Activated CD4-positive, alpha-beta T cell treated with anti-CD3 and anti-CD28 coated beads for 36 hours (primary cell): ENCODE measurements at regions of chr16 and their contacts with region 1.

Region 1: GRCh38 chr16:87203060-87203656 is 114.0 kb downstream of the C16orf95 start:
- DNase-seq: peak; percentile 79
- ATAC-seq: peak; percentile 83
- H3K4me3 Mint-ChIP-seq: no peak overlapping the region
- H3K27ac Mint-ChIP-seq: no peak overlapping the region
- H3K4me1 Mint-ChIP-seq: no peaks in the 10 kb centered on the region
- H3K27me3 Mint-ChIP-seq: peaks cover 8% of the 10 kb centered on the region

Region 2: DNA sequence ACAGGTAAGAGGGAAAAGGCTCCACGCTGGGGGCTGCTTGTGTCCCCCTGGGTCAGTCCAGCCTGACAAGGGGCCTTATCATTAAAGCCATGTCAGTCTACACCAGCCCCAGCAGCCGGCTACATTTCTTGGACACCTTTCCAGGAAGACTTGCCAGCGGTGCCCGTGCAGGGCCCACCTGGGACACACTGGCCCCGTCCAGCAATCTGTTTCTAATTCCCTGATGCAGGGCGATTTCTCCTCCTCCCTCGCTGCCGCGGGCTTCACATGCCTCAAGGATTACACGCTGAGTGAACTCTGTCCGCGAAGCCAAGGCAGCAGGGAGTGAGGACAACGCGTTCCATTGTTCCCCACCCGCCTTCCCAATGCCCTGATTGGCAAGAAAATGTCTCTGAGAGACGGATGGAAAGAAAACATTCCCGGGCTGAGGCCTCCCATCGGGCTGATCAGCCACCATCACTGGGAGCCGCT is 70.6 kb before region 1 on chr16:
- CTCF ChIA-PET with region 1: no interaction called
- POLR2A ChIA-PET with region 1: no interaction called
- intact Hi-C with region 1: no loop called
- DNase-seq: no peak
- ATAC-seq: no peak
- H3K4me3 Mint-ChIP-seq: no peak overlapping the region
- H3K27ac Mint-ChIP-seq: no peak overlapping the region
- H3K4me1 Mint-ChIP-seq: no peaks in the 10 kb centered on the region
- H3K27me3 Mint-ChIP-seq: no peaks in the 10 kb centered on the region

Region 3: DNA sequence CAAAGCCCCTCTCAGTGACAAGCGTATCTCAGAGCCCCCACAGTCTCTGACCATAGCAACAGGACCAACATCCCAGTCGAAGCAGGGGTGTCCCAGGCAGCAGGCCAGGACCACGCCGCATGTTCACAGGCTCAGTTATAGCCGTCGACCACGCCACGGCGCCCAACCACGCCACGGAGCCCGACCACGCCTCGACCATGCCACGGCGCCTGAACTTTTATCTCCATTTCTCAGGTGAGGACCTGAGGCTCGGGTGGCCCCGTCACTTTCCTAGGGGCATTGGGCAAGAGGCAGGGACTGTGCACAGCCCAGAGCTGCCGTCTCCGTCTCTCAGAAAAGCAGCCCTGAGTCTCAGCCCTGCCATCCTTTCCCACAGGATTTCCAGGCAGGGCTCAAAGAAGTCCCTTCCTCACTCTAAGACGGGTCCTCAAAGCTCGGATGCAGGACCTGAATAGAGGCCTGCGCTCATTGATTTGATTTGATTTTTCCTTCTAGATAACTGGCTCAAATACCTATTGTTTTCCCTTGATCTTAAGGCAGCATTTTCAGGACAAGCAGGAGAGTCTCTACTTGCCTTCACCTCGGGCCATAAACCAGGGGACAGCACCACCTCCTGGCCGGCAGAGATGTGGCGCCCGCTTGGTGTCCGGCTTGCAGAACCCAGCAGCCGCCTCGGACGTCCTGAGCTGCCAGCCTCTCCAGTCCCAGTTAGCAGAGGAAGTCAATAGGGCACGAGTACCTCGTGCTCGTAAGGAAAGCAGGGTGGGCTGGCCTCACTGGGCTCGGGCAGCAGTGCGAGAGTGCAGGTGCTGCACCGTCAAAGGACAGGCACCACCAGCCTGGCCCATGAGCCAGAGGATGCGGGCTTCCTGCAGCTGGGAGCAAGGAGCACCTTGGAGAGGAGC is 75.3 kb after region 1 on chr16:
- CTCF ChIA-PET with region 1: interaction called, 10 read pairs
- POLR2A ChIA-PET with region 1: no interaction called
- intact Hi-C with region 1: loop called (anchors 1 to 2 kb)
- DNase-seq: peak; percentile 76
- ATAC-seq: peak; percentile 70
- H3K4me3 Mint-ChIP-seq: no peak overlapping the region
- H3K27ac Mint-ChIP-seq: no peak overlapping the region
- H3K4me1 Mint-ChIP-seq: no peaks in the 10 kb centered on the region
- H3K27me3 Mint-ChIP-seq: peaks cover 5% of the 10 kb centered on the region